Left lung (tissue), 14 donors: ENCODE measurements at regions of chr4 and their contacts with region 1.

Region 1: GRCh38 chr4:86895692-86896488 is 3.7 kb upstream of the C4orf36 start:
- DNase-seq: peak in 2 of 4 donors; percentile 65 to 75
- ATAC-seq: peak; percentile 40
- H3K4me3 ChIP-seq: no peak overlapping the region
- H3K27ac ChIP-seq: no peak overlapping the region
- H3K4me1 ChIP-seq: peaks cover 0 to 28% of the 10 kb centered on the region in 2 donors
- H3K27me3 ChIP-seq: peaks cover 0 to 18% of the 10 kb centered on the region in 2 donors
- CTCF ChIP-seq: peak; percentile 63 to 82

Region 2: GRCh38 chr4:86497980-86498862 is 397.7 kb before region 1 on chr4:
- intact Hi-C with region 1: loop called in 1 of 2 experiments (anchors 5 kb)
- DNase-seq: peak in 3 of 4 donors; percentile 37 to 67 (median 57)
- ATAC-seq: peak; percentile 89
- H3K4me3 ChIP-seq: no peak overlapping the region
- H3K27ac ChIP-seq: no peak overlapping the region
- H3K4me1 ChIP-seq: peaks cover 0 to 17% of the 10 kb centered on the region in 2 donors
- H3K27me3 ChIP-seq: no peaks in the 10 kb centered on the region
- CTCF ChIP-seq: peak; percentile 73 to 74